PC-9 (cell line): ENCODE measurements at regions of chr10 and their contacts with region 1.

Region 1: DNA sequence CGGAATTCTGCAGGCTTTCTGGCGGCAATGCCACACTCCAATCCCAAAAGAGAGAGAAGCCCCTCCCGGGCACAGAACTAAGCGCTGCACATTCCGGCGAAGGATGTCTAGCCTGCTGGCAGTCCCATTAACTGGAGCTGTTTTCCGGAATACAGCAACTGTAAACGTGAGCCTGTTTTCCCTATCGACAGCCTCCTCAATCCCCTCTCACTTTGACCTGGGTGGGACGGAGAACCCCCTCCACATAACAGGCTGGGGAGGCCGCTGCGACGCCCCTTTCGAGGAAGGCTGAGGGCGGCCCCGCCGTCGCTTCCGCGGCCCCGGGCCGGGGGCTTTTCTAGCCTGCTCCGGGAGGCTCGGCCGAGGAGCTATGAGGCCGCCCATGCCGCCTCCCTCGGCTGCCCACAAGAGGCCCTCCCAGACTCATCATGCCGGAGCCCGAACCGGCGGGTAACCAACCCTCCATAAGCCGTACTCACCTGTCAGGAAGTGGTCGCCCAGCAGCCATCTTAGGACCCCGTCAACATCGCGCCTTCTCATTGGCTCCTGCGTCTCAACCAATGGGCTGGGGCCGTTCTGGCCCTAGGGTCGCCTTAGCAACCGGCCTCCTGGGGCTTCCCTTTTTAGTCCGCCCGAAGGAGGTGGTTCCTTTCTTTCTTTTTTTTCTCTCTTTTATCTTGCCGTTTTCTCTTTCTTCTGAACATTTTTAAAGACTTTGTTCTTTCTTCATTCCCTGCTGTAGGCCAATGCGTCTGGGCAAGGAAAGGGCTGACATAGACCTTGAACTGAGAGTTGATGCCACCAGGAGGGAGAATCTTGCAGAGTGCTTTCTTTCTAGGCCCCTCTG is at the start of gene FAM204A:
- DNase-seq: peak; percentile 80 to 88
- H3K4me3 ChIP-seq: peak within 1 kb of the TSS; percentile 89
- H3K27ac ChIP-seq: peak within 1 kb of the TSS; percentile 46; the same call in 1 of the 2 replicates
- H3K4me1 ChIP-seq: peaks cover 9% of the 10 kb centered on the region; the same call in 1 of the 2 replicates
- H3K27me3 ChIP-seq: no peaks in the 10 kb centered on the region
- CTCF ChIP-seq: no peak
- total RNA-seq, gene FAM204A: 44.4 and 51.9 TPM in 2 replicates

Region 2: GRCh38 chr10:118383699-118384098 is 41.7 kb after region 1 on chr10:
- CTCF ChIA-PET with region 1: no interaction called
- POLR2A ChIA-PET with region 1: no interaction called
- intact Hi-C with region 1: loop called (anchors 1 kb)
- DNase-seq: no peak
- H3K4me3 ChIP-seq: no peak overlapping the region
- H3K27ac ChIP-seq: 0 out of 2 replicates have a peak overlapping the region, but pooled peaks have one; percentile 19
- H3K4me1 ChIP-seq: peaks cover 15% of the 10 kb centered on the region; the same call in 1 of the 2 replicates
- H3K27me3 ChIP-seq: no peaks in the 10 kb centered on the region
- CTCF ChIP-seq: no peak

Region 3: GRCh38 chr10:118423800-118424479 is 81.9 kb after region 1 on chr10:
- CTCF ChIA-PET with region 1: no interaction called
- POLR2A ChIA-PET with region 1: no interaction called
- intact Hi-C with region 1: loop called (anchors 1 kb)
- DNase-seq: peak; percentile 61 to 72
- H3K4me3 ChIP-seq: no peak overlapping the region
- H3K27ac ChIP-seq: no peak overlapping the region
- H3K4me1 ChIP-seq: no peaks in the 10 kb centered on the region
- H3K27me3 ChIP-seq: no peaks in the 10 kb centered on the region
- CTCF ChIP-seq: peak; percentile 81

Region 4: GRCh38 chr10:118543714-118544400 is 201.8 kb after region 1 on chr10:
- CTCF ChIA-PET with region 1: no interaction called
- POLR2A ChIA-PET with region 1: no interaction called
- intact Hi-C with region 1: loop called (anchors 2 kb)
- DNase-seq: peak; percentile 43 to 56
- H3K4me3 ChIP-seq: no peak overlapping the region
- H3K27ac ChIP-seq: no peak overlapping the region
- H3K4me1 ChIP-seq: no peaks in the 10 kb centered on the region; the same call in 1 of the 2 replicates
- H3K27me3 ChIP-seq: no peaks in the 10 kb centered on the region
- CTCF ChIP-seq: peak; percentile 78